Activated naive CD4-positive, alpha-beta T cell treated with anti-CD3 and anti-CD28 coated beads for 36 hours (primary cell): ENCODE measurements at regions of chrX and their contacts with region 1.

Region 1: GRCh38 chrX:48083212-48083611 is 11.8 kb upstream of the ZNF630 start:
- DNase-seq: peak; percentile 68
- H3K4me3 Mint-ChIP-seq: no peak overlapping the region
- H3K27ac Mint-ChIP-seq: no peak overlapping the region
- H3K4me1 Mint-ChIP-seq: no peaks in the 10 kb centered on the region
- H3K27me3 Mint-ChIP-seq: no peaks in the 10 kb centered on the region

Region 2: DNA sequence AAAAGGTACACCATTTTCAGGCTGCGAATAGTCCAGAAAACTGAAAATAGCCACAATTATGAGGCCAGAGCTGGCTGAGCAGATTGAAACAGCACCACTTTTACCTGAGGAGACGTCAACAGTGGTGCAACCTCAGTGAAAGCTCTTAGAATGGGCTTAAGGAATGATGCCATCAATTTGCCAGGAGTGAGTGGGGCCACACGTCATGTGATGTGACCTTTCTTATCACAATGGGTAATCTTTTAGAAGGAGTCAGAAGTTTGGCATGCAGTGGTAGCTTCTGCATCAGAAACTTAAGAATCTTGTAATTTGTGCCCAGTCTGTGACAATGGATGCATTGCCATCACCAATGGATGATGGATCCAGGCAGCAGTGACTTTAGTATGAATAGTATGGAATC is 218.9 kb before region 1 on chrX:
- CTCF ChIA-PET with region 1: no interaction called
- intact Hi-C with region 1: no loop called
- DNase-seq: no peak
- H3K4me3 Mint-ChIP-seq: no peak overlapping the region
- H3K27ac Mint-ChIP-seq: no peak overlapping the region
- H3K4me1 Mint-ChIP-seq: no peaks in the 10 kb centered on the region
- H3K27me3 Mint-ChIP-seq: no peaks in the 10 kb centered on the region

Region 3: DNA sequence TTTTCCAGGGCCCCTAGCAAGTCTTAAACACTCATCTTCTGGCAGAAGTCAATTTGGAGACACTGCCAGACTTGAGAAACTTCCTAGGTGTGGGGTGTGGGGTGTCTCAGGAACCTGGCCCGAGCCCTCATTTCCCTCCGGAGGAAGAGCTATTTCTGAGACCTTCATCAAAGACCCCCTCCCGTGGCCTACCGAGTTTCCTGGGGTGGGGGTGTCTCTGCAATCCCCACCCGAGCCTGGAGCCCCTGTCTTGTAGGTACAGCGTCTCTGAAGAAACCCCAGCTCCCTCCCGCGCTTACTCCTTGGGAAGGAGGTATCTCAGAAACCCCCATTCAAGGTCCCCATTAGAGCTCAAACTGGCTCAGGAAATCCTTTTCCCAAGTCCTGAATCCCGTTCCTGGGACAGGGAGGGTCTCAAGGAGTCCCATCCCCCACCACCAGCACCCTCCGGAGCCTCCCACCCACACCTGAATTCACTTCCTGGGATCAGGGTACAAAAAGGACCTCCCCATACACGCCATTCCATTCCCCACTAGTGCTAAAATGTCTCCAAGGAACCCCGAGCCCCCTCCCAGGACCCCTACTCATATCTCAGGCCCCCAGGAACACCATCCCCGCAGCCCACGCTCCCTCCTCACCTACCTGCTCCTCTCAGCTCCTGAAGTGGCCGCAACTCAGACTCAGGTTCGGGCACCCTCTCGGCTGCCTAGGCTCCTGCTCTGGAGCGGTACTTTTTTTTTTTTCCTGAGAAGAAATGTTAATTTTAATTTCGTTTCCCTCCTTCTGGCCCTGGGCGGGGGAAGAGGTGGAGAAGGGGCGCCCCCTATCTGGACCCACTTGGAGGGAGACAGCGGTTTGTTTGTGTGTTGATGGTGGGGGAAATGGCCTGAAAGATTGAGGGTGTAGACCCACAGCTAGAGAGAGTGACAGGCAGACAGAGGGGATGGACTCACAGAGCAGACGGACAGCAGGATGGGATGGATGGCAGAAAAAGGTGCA is 385.8 kb after region 1 on chrX:
- CTCF ChIA-PET with region 1: interaction called, 3 read pairs
- intact Hi-C with region 1: loop called (anchors 1 kb)
- DNase-seq: peak; percentile 70
- H3K4me3 Mint-ChIP-seq: peak overlapping the region; percentile 96
- H3K27ac Mint-ChIP-seq: peak overlapping the region; percentile 95
- H3K4me1 Mint-ChIP-seq: peaks cover 34% of the 10 kb centered on the region
- H3K27me3 Mint-ChIP-seq: no peaks in the 10 kb centered on the region

Region 4: GRCh38 chrX:48493890-48494364 is 410.7 kb after region 1 on chrX:
- CTCF ChIA-PET with region 1: interaction called, 3 read pairs
- intact Hi-C with region 1: loop called (anchors 5 kb)
- DNase-seq: peak; percentile 30
- H3K4me3 Mint-ChIP-seq: no peak overlapping the region
- H3K27ac Mint-ChIP-seq: no peak overlapping the region
- H3K4me1 Mint-ChIP-seq: no peaks in the 10 kb centered on the region
- H3K27me3 Mint-ChIP-seq: no peaks in the 10 kb centered on the region